RWPE1 (cell line): ENCODE measurements at regions of chr3 and their contacts with region 1.

Region 1: GRCh38 chr3:112531358-112531781 is 30.4 kb downstream of the ATG3 start:
- DNase-seq: peak; percentile 19
- H3K27ac ChIP-seq: no peak overlapping the region
- CTCF ChIP-seq: peak; percentile 66

Region 2: DNA sequence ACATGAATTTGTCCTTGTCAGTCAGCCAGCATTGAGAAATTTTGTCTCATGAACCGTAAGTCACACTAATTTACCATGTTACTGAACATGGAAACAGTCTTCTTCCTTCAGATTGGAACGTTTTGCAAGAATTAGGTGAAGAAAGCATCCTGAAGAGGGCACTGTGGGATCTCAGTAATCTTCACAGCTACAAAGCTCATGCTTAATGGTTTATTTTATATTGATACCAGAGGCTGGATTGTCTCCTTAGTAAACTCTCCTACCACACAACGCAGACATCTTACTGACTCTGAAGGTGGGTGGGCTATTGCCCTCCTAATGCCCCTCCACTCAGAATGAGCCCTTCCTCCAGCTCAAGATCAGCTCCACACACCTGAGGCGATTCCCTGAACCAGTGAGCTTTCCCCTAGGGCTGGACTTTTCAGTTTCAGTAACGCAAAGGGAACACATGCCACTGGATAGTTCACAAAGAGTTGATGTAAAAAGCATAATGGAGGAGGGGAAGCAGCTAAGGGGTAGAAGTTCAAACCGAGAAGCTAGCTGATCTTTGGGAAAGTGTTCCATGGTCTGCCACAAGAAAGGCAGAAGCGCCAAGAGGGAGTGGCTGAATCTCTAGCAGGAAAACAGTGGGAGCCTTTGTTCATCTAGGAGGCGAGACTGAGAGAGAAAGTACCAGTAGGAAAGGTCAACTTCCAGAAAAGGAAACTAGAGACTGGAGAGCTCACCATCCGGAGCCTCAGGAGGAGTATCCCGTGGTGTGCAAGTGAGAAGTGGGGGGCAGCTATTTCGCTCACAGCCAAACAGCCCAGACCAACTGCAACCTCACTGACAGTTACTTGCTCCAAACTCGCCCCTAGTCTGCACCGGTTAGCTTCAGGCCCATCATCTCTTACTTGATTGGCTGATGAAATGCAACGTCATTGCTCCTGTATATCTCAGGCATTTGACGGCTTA is 237.7 kb before region 1 on chr3 and contains the start of gene SLC9C1:
- CTCF ChIA-PET with region 1: interaction called, 11 read pairs
- POLR2A ChIA-PET with region 1: no interaction called
- DNase-seq: peak; percentile 23
- H3K27ac ChIP-seq: no peak within 1 kb of the TSS
- CTCF ChIP-seq: peak; percentile 63

Region 3: DNA sequence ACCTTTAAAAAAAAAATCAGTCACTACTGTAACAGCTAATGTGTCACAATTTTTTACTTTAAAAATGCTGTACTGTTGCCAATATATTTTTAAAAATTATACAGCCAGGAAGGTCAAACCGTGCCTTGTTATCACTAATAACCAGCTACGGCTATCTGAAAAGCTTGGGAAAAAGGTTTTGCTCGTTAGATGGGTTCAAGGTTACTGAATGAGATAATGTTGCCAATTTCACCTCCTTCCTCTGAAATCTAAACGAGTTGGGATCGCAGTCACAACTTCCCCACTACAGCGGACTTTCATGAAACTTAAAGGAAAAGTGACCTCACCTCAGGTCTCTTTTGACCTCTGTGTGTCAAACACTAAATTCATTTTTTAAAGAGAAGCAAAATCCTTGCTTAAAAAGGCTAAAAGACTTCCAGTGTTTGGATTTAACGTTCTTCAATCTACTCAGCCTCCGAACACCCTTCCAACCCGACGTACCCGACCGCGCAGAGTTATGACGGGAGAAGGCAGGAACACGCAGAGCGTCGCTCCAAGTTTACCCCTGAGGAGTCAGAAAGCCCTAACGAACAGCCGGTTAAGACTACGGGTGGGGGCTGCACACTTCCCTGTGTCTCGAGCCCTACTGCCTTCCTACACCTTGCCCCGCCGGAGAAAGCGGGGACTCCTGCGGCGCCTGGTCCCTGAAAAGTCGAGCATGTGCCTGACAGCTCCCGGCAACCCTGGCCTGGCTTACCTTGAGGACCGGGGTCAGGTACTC is 29.5 kb after region 1 on chr3:
- CTCF ChIA-PET with region 1: interaction called, 11 read pairs
- POLR2A ChIA-PET with region 1: no interaction called
- DNase-seq: peak; percentile 71
- H3K27ac ChIP-seq: peak overlapping the region; percentile 97
- CTCF ChIP-seq: no peak

Region 4: GRCh38 chr3:112676659-112677234 is 145.4 kb after region 1 on chr3:
- CTCF ChIA-PET with region 1: no interaction called
- POLR2A ChIA-PET with region 1: no interaction called
- DNase-seq: peak; percentile 87
- H3K27ac ChIP-seq: peak overlapping the region; percentile 61
- CTCF ChIP-seq: no peak

Region 5: GRCh38 chr3:113097960-113098447 is 566.6 kb after region 1 on chr3:
- CTCF ChIA-PET with region 1: no interaction called
- POLR2A ChIA-PET with region 1: no interaction called
- DNase-seq: peak; percentile 78
- H3K27ac ChIP-seq: no peak overlapping the region
- CTCF ChIP-seq: no peak

Region 6: DNA sequence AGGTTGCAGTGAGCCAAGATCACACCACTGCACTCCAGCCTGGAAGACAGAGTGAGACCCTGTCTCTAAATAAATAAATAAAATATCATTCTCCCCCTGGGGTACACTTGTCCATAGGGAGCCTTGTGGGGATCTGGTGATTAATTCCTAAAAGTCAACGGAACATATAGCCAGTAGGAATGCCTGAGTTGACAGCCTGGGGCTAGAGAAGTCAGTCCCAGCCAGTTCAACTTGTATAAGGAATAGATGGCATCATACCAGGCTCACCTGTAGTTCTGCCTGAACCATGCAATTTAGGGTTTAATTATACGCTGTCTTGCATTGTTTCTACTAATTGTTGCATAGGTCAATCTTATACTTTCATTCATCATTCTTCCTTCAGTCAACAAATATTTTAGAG is 674.1 kb after region 1 on chr3:
- CTCF ChIA-PET with region 1: no interaction called
- POLR2A ChIA-PET with region 1: no interaction called
- DNase-seq: no peak
- H3K27ac ChIP-seq: no peak overlapping the region
- CTCF ChIP-seq: no peak